PC-9 (cell line): ENCODE measurements at regions of chr6 and their contacts with region 1.

Region 1: GRCh38 chr6:110815217-110816109 is at the start of gene CDK19:
- DNase-seq: peak; percentile 98
- H3K4me3 ChIP-seq: peak within 1 kb of the TSS; percentile 58
- H3K27ac ChIP-seq: peak within 1 kb of the TSS; percentile 80
- H3K4me1 ChIP-seq: peaks cover 30% of the 10 kb centered on the region
- H3K27me3 ChIP-seq: no peaks in the 10 kb centered on the region
- CTCF ChIP-seq: no peak
- total RNA-seq, gene CDK19: 34.0 and 36.8 TPM in 2 replicates

Region 2: GRCh38 chr6:109718991-109719390 is 1096.5 kb before region 1 on chr6:
- CTCF ChIA-PET with region 1: no interaction called
- POLR2A ChIA-PET with region 1: no interaction called
- intact Hi-C with region 1: no loop called
- DNase-seq: no peak
- H3K4me3 ChIP-seq: no peak overlapping the region
- H3K27ac ChIP-seq: no peak overlapping the region
- H3K4me1 ChIP-seq: no peaks in the 10 kb centered on the region
- H3K27me3 ChIP-seq: no peaks in the 10 kb centered on the region
- CTCF ChIP-seq: no peak

Region 3: GRCh38 chr6:110688661-110689268 is 126.7 kb before region 1 on chr6:
- CTCF ChIA-PET with region 1: no interaction called
- POLR2A ChIA-PET with region 1: interaction called, 6 read pairs
- intact Hi-C with region 1: loop called (anchors 5 kb)
- DNase-seq: peak; percentile 68 to 77
- H3K4me3 ChIP-seq: no peak overlapping the region
- H3K27ac ChIP-seq: no peak overlapping the region
- H3K4me1 ChIP-seq: peaks cover 15% of the 10 kb centered on the region
- H3K27me3 ChIP-seq: no peaks in the 10 kb centered on the region
- CTCF ChIP-seq: no peak

Region 4: DNA sequence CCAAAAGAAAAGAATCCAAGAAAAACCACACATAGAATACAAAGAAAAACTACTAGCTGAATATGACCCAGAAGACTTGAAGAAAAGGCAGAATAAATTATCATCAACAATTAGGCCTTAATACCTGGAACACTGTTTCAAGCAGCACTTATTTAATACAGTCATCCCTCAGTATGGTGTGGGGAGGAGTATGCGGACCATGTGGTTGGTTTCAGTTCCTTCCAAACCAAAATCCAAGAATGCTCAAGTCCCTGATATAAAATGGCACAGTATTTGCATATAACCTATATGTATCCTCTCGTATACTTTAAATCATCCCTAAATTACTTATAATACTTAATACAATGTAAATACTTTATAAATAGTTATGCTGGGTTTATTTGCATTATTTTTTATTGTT is 16.3 kb before region 1 on chr6:
- CTCF ChIA-PET with region 1: interaction called, 12 read pairs
- POLR2A ChIA-PET with region 1: no interaction called
- intact Hi-C with region 1: no loop called
- DNase-seq: no peak
- H3K4me3 ChIP-seq: no peak overlapping the region
- H3K27ac ChIP-seq: no peak overlapping the region
- H3K4me1 ChIP-seq: 0 out of 2 replicates have a peak, but pooled peaks cover 5% of the 10 kb centered on the region
- H3K27me3 ChIP-seq: no peaks in the 10 kb centered on the region
- CTCF ChIP-seq: no peak

Region 5: GRCh38 chr6:110853754-110854477 is 38.5 kb after region 1 on chr6:
- CTCF ChIA-PET with region 1: no interaction called
- POLR2A ChIA-PET with region 1: no interaction called
- intact Hi-C with region 1: no loop called
- DNase-seq: peak in 1 of 2 experiments; percentile 86
- H3K4me3 ChIP-seq: no peak overlapping the region
- H3K27ac ChIP-seq: no peak overlapping the region
- H3K4me1 ChIP-seq: peaks cover 12% of the 10 kb centered on the region
- H3K27me3 ChIP-seq: no peaks in the 10 kb centered on the region
- CTCF ChIP-seq: no peak

Region 6: GRCh38 chr6:110873981-110874879 is 58.8 kb after region 1 on chr6 and contains the start of gene AMD1:
- CTCF ChIA-PET with region 1: no interaction called
- POLR2A ChIA-PET with region 1: interaction called, 60 read pairs
- intact Hi-C with region 1: loop called (anchors 1 kb)
- DNase-seq: peak; percentile 93 to 95
- H3K4me3 ChIP-seq: peak within 1 kb of the TSS; percentile 90
- H3K27ac ChIP-seq: peak within 1 kb of the TSS; percentile 73
- H3K4me1 ChIP-seq: peaks cover 36% of the 10 kb centered on the region
- H3K27me3 ChIP-seq: no peaks in the 10 kb centered on the region
- CTCF ChIP-seq: no peak
- total RNA-seq, gene AMD1: 40.1 and 46.4 TPM in 2 replicates

Region 7: GRCh38 chr6:110958329-110959192 is 143.1 kb after region 1 on chr6 and contains the start of gene GTF3C6:
- CTCF ChIA-PET with region 1: no interaction called
- POLR2A ChIA-PET with region 1: interaction called, 4 read pairs
- intact Hi-C with region 1: loop called (anchors 1 kb)
- DNase-seq: peak; percentile 77
- H3K4me3 ChIP-seq: peak within 1 kb of the TSS; percentile 79
- H3K27ac ChIP-seq: peak within 1 kb of the TSS; percentile 84
- H3K4me1 ChIP-seq: peaks cover 5% of the 10 kb centered on the region
- H3K27me3 ChIP-seq: no peaks in the 10 kb centered on the region
- CTCF ChIP-seq: no peak
- total RNA-seq, gene GTF3C6: 27.9 and 28.5 TPM in 2 replicates